GM12878 (cell line): ENCODE measurements at regions of chr17 and their contacts with region 1.

Region 1: DNA sequence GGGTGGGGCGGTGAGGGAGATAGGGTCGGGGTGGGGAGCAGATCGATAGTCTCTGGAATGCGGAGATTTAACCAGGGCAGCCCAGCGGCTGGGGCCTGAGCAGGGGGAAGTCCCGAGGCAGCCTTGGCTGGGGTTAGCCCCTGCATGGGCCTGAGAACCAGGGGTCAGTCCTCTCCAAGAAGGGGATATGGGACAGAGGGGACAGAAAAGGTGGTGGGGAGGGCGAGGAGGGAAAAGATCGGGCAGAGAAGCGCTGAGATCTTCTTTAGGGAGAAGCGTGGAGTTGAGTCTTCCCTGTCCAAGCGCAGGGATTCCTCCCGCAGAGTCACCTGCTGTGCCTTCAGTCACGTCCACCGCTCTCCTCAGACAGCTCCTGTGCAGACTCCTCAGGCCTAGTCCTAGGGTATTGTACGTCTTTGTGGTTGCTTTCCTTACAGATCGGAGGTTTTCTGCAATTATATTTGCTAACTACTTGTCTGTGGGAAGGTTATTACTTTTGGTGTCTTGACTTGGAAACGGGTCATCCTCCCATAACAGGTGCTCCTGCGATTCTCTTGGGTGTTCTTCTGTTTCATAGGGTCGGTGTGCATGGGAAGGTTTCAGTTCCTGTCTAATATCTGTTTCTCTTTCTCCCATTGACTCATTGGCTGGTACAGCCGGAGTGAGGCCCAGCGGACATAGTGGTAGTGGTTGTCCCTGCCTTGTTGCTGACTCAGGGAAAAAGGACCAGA is 952 bp downstream of the CD300A start:
- DNase-seq: peak; percentile 95
- ATAC-seq: peak; percentile 78
- H3K4me3 ChIP-seq: peak overlapping the region; percentile 86
- H3K27ac ChIP-seq: peak overlapping the region; percentile 92
- H3K4me1 ChIP-seq: peaks cover 35% of the 10 kb centered on the region
- H3K27me3 ChIP-seq: no peaks in the 10 kb centered on the region
- CTCF ChIP-seq: no peak
- EP300 ChIP-seq: peak; percentile 68 to 79
- POLR2A ChIP-seq: peak; percentile 58; the same call in 1 of the 2 replicates
- RAD21 ChIP-seq: 0 out of 2 replicates have a peak, but pooled peaks have one; percentile 3

Region 2: DNA sequence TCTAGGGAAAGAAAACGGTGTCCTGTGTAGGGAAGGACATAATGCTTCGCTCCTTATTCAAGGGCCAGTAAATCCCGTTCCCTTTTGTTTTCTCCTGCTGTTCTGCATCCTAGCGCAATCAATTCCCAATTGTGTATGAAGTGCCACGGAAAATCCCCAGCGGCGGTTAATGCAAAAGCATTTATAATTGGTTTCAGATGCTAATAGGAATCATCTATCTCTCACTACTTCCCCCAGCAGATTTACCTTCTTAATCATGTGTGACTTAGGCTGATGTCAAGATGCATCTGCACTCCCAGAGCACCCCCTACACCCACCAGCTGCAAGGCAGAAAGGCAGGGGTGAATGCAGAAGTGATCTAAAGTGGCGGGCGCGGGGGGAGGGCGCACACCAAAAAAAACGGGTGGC is 1335.3 kb before region 1 on chr17:
- CTCF ChIA-PET with region 1: no interaction called
- POLR2A ChIA-PET with region 1: no interaction called
- RAD21 ChIA-PET with region 1: no interaction called
- SMC1A ChIA-PET with region 1: no interaction called
- in situ Hi-C with region 1: no loop called
- intact Hi-C with region 1: no loop called
- DNase-seq: no peak
- ATAC-seq: peak; percentile 82
- H3K4me3 ChIP-seq: no peak overlapping the region
- H3K27ac ChIP-seq: no peak overlapping the region
- H3K4me1 ChIP-seq: peaks cover 4% of the 10 kb centered on the region; the same call in 1 of the 2 replicates
- H3K27me3 ChIP-seq: no peaks in the 10 kb centered on the region
- CTCF ChIP-seq: no peak
- EP300 ChIP-seq: no peak
- POLR2A ChIP-seq: no peak
- RAD21 ChIP-seq: no peak

Region 3: DNA sequence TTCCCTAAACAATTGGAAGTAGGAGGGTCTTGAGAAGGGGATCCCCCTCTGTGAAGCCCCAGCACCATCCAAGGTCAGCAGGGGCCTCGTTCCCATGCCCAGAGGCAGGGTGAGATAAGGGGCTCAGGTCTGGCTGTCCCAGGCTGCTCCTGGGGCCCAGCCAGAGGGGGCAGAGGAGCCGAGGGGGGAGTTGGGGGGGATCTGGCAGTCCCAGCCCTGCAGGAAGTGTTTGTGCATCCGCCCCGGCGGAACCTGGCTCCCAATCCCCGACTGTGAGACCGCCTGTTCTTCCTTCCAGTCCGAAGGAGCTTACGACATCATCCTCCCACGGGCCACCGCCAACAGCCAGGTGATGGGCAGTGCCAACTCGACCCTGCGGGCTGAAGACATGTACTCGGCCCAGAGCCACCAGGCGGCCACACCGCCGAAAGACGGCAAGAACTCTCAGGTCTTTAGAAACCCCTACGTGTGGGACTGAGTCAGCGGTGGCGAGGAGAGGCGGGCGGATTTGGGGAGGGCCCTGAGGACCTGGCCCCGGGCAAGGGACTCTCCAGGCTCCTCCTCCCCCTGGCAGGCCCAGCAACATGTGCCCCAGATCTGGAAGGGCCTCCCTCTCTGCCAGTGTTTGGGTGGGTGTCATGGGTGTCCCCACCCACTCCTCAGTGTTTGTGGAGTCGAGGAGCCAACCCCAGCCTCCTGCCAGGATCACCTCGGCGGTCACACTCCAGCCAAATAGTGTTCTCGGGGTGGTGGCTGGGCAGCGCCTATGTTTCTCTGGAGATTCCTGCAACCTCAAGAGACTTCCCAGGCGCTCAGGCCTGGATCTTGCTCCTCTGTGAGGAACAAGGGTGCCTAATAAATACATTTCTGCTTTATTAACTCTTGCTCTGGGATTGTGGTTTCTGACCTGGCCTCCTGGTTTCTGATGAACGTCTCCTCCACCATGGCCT is 20.6 kb before region 1 on chr17:
- CTCF ChIA-PET with region 1: no interaction called
- POLR2A ChIA-PET with region 1: no interaction called
- RAD21 ChIA-PET with region 1: no interaction called
- SMC1A ChIA-PET with region 1: no interaction called
- in situ Hi-C with region 1: no loop called
- intact Hi-C with region 1: no loop called
- DNase-seq: no peak
- ATAC-seq: no peak
- H3K4me3 ChIP-seq: no peak overlapping the region
- H3K27ac ChIP-seq: no peak overlapping the region
- H3K4me1 ChIP-seq: peaks cover 5% of the 10 kb centered on the region; the same call in 1 of the 2 replicates
- H3K27me3 ChIP-seq: no peaks in the 10 kb centered on the region
- CTCF ChIP-seq: no peak
- EP300 ChIP-seq: no peak
- POLR2A ChIP-seq: no peak
- RAD21 ChIP-seq: no peak

Region 4: GRCh38 chr17:74478420-74479100 is 11.2 kb after region 1 on chr17:
- CTCF ChIA-PET with region 1: interaction called, 4 read pairs
- POLR2A ChIA-PET with region 1: interaction called, 13 read pairs
- RAD21 ChIA-PET with region 1: interaction called, 11 read pairs
- SMC1A ChIA-PET with region 1: interaction called, 9 read pairs
- in situ Hi-C with region 1: no loop called
- intact Hi-C with region 1: no loop called
- DNase-seq: peak; percentile 69
- ATAC-seq: peak; percentile 81
- H3K4me3 ChIP-seq: no peak overlapping the region
- H3K27ac ChIP-seq: peak overlapping the region; percentile 6; the same call in 1 of the 2 replicates
- H3K4me1 ChIP-seq: peaks cover 20% of the 10 kb centered on the region
- H3K27me3 ChIP-seq: no peaks in the 10 kb centered on the region
- CTCF ChIP-seq: no peak
- EP300 ChIP-seq: no peak
- POLR2A ChIP-seq: no peak
- RAD21 ChIP-seq: no peak